ENCODE measurements at regions of chr17 and their contacts with region 1.

Region 1: DNA sequence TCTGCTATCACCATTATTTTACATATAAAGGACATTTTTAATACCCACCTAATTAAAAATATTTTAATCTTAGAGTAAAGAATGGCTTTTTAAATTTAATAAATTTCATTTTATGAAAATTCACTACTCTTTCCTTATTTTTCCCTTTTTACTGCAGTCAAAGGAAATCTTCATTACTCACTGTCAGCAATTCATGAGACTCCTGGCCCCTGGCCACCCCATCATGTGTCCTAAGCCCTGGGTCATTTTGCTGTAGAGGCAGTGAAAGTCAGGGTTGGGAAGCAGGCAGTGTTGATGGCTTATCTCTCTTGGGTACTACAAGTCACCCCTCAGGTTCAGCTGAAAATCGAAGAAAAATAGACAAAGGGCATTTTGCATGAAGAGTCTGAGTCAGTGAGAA is 468.6 kb upstream of the CCL2 start:
- DNase-seq: no peak
- H3K4me3 ChIP-seq: no peak overlapping the region
- H3K27ac ChIP-seq: no peak overlapping the region
- H3K4me1 ChIP-seq: no peaks in the 10 kb centered on the region
- H3K27me3 ChIP-seq: no peaks in the 10 kb centered on the region
- CTCF ChIP-seq: no peak

Region 2: DNA sequence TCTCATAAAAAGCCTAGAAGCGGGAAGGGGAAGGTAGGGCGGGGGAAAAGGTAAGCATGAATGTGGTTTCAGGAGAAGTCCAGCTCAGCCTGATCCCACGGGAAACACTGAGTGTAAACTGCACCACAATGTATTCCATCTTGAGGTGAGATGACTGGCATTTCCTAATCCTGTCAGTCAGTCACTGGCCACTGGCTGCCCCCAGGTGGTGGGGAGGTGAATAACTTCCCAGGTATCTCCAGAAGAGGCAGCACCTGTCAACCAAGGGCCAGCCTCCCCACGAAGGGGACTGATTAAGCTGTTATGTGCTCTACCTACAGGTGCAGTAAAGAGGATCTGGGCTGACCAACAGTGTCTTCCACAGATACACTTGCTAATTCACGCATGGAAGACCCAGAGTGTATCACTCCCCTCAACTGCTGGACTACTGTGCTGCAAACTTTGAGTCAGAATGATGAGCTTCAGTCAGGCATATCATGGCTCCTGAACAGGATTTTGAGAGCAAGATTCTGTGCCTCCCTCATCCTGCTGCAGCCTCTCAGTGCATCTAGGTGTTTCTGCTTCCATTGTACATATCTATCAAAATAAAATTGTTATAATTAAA is 360.1 kb after region 1 on chr17:
- intact Hi-C with region 1: loop called (anchors 10 kb)
- DNase-seq: peak; percentile 72
- H3K4me3 ChIP-seq: no peak overlapping the region
- H3K27ac ChIP-seq: no peak overlapping the region
- H3K4me1 ChIP-seq: no peaks in the 10 kb centered on the region
- H3K27me3 ChIP-seq: no peaks in the 10 kb centered on the region
- CTCF ChIP-seq: peak; percentile 32